ENCODE measurements at regions of chr5 and their contacts with region 1.

Region 1: GRCh38 chr5:42514754-42515153 is 91.5 kb downstream of the GHR start:
- DNase-seq: peak in 1 of 4 experiments; percentile 30
- ATAC-seq: peak; percentile 64
- H3K4me3 ChIP-seq: no peak overlapping the region
- H3K27ac ChIP-seq: no peak overlapping the region
- H3K4me1 ChIP-seq: no peaks in the 10 kb centered on the region
- H3K27me3 ChIP-seq: no peaks in the 10 kb centered on the region
- CTCF ChIP-seq: peak; percentile 13 to 41 (median 36); a peak in 3 of 6 replicates
- EP300 ChIP-seq: no peak
- POLR2A ChIP-seq: no peak
- RAD21 ChIP-seq: peak; percentile 31 to 54

Region 2: DNA sequence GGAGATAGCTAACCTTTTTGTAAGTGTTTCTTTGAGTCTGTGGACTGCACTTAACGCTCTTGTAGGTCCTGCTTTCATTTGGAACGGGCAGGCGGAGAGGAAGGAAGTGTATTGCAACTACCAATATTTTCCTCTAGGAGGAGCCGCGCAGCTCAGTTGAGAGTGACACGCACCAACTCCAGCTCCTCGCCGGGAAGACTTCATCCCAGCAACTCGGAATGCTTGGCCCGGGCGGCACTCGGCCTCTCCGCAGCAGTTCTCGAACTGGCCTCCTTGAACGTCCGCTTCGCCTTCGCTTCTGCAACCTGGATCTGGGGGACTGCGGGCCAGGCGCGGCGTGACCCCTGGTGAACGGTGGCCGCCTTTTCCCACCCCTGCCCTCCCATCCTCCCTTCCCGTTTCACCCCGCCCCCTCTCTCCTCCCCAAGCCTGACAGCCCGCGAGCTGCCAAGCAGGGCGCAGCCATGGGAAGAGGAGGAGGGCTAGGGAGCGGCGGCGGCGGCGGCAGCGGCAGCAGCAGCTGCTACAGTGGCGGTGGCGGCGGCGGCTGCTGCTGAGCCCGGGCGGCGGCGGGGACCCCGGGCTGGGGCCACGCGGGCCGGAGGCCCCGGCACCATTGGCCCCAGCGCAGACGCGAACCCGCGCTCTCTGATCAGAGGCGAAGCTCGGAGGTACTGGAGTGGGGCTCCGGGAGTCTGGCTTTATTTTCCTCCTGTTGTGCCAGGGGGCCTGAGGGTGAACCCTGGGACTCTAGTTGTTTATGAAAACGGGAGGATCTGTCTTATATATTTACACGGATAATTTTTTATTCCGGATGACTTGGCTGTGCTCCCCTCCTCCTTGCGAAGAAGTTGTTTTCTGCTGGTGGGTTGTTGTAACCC is 91.2 kb before region 1 on chr5 and contains the start of gene GHR:
- CTCF ChIA-PET with region 1: no interaction called
- POLR2A ChIA-PET with region 1: no interaction called
- in situ Hi-C with region 1: no loop called
- intact Hi-C with region 1: no loop called
- DNase-seq: peak; percentile 35 to 66 (median 42)
- ATAC-seq: peak; percentile 98
- H3K4me3 ChIP-seq: peak within 1 kb of the TSS; percentile 25; the same call in 1 of the 2 replicates
- H3K27ac ChIP-seq: no peak within 1 kb of the TSS
- H3K4me1 ChIP-seq: peaks cover 0 to 14% of the 10 kb centered on the region in 2 experiments; a peak in 2 of 5 replicates
- H3K27me3 ChIP-seq: peaks cover 0 to 7% of the 10 kb centered on the region in 2 experiments; a peak in 2 of 5 replicates
- CTCF ChIP-seq: peak; percentile 53 to 64 (median 60)
- EP300 ChIP-seq: no peak
- POLR2A ChIP-seq: no peak
- RAD21 ChIP-seq: peak; percentile 39 to 54; a peak in 3 of 4 replicates
- polyA plus RNA-seq, gene GHR: 0.01 to 0.04 TPM

Region 3: GRCh38 chr5:42636425-42636824 is 121.7 kb after region 1 on chr5:
- CTCF ChIA-PET with region 1: no interaction called
- POLR2A ChIA-PET with region 1: no interaction called
- in situ Hi-C with region 1: no loop called
- intact Hi-C with region 1: loop called (anchors 5 kb)
- DNase-seq: peak in 3 of 4 experiments; percentile 19 to 54 (median 22)
- ATAC-seq: peak; percentile 80
- H3K4me3 ChIP-seq: no peak overlapping the region
- H3K27ac ChIP-seq: no peak overlapping the region
- H3K4me1 ChIP-seq: no peaks in the 10 kb centered on the region; a peak in 1 of 5 replicates
- H3K27me3 ChIP-seq: no peaks in the 10 kb centered on the region; a peak in 1 of 5 replicates
- CTCF ChIP-seq: peak; percentile 35 to 60 (median 54); a peak in 5 of 6 replicates
- EP300 ChIP-seq: no peak
- POLR2A ChIP-seq: no peak
- RAD21 ChIP-seq: peak in 1 of 2 experiments; percentile 60; a peak in 3 of 4 replicates

Region 4: DNA sequence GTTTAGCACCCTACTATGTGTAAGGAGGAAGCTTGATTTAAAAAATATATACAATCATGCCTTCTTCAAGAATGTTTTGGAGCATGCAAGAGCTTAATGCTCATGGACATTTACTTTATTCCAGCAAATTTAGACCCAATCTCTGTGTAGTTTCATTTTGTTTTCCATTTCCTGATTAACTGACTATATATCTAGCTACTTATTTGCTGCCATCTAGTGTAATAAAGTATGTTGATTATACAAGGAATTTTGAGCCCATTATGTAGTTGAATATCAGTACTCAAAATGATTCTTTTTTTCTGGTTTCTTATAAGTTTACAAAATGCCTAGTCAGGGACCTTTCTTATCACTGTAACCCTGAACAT is 141.9 kb after region 1 on chr5:
- CTCF ChIA-PET with region 1: interaction called, 13 read pairs
- POLR2A ChIA-PET with region 1: no interaction called
- in situ Hi-C with region 1: no loop called
- intact Hi-C with region 1: no loop called
- DNase-seq: no peak
- ATAC-seq: no peak
- H3K4me3 ChIP-seq: no peak overlapping the region
- H3K27ac ChIP-seq: no peak overlapping the region
- H3K4me1 ChIP-seq: no peaks in the 10 kb centered on the region
- H3K27me3 ChIP-seq: no peaks in the 10 kb centered on the region; a peak in 1 of 5 replicates
- CTCF ChIP-seq: peak in 2 of 3 experiments; percentile 7 to 42; a peak in 3 of 6 replicates
- EP300 ChIP-seq: no peak
- POLR2A ChIP-seq: no peak
- RAD21 ChIP-seq: peak; percentile 36 to 57

Measured in K562 (cell line).